ENCODE measurements at regions of chr7 and their contacts with region 1.

Region 1: DNA sequence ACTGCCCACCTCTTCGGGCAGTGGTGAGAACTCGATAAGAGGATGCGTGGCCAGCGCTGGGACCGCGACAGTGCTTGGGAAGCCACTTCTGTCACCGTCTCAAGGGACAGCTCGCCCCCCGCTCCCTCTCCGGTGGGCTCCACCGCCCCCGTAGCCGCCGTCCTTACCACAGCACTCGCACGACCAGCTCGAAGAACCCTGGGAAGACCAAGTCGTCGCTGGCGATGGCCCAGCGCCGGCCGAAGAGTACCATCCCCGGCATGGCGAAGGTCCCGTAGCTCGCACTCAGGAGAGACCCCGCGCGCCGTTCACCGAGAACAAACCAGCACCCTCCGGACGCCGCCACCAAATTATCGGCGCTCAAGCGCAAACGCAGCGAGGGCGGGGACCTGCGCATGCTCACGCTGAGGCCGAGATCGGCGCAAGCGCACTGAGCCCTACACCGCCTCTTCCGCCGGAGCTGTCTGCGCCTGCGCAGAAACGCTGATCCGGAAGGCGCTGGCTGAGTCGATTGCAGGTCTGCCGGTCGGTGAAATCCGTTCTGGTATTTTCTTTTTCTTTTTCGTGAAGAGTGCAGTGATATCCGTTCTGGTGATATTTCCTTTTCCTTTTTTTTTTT is at the start of gene DAGLB:
- DNase-seq: peak; percentile 89 to 100 (median 94)
- ATAC-seq: peak; percentile 83 to 87 (median 85)
- H3K4me3 ChIP-seq: peak within 1 kb of the TSS; percentile 98 to 99
- H3K4me3 Mint-ChIP-seq: peak within 1 kb of the TSS; percentile 92 to 97 (median 94)
- H3K27ac ChIP-seq: peak within 1 kb of the TSS; percentile 67
- H3K27ac Mint-ChIP-seq: peak within 1 kb of the TSS; percentile 96 to 97
- H3K4me1 ChIP-seq: peaks cover 25 to 33% of the 10 kb centered on the region in 2 experiments
- H3K4me1 Mint-ChIP-seq: peaks cover 32 to 45% (median 35%) of the 10 kb centered on the region in 3 donors
- H3K27me3 ChIP-seq: no peaks in the 10 kb centered on the region
- H3K27me3 Mint-ChIP-seq: no peaks in the 10 kb centered on the region
- total RNA-seq, gene DAGLB: 23.9 to 45.0 (median 38.9) TPM

Region 2: GRCh38 chr7:5792268-5792667 is 655.4 kb before region 1 on chr7:
- CTCF ChIA-PET with region 1: interaction called in 1 of 2 experiments, 10 read pairs
- POLR2A ChIA-PET with region 1: no interaction called
- DNase-seq: no peak
- ATAC-seq: no peak
- H3K4me3 ChIP-seq: no peak overlapping the region
- H3K4me3 Mint-ChIP-seq: no peak overlapping the region
- H3K27ac ChIP-seq: no peak overlapping the region
- H3K27ac Mint-ChIP-seq: no peak overlapping the region
- H3K4me1 ChIP-seq: no peaks in the 10 kb centered on the region
- H3K4me1 Mint-ChIP-seq: no peaks in the 10 kb centered on the region
- H3K27me3 ChIP-seq: no peaks in the 10 kb centered on the region
- H3K27me3 Mint-ChIP-seq: no peaks in the 10 kb centered on the region

Region 3: DNA sequence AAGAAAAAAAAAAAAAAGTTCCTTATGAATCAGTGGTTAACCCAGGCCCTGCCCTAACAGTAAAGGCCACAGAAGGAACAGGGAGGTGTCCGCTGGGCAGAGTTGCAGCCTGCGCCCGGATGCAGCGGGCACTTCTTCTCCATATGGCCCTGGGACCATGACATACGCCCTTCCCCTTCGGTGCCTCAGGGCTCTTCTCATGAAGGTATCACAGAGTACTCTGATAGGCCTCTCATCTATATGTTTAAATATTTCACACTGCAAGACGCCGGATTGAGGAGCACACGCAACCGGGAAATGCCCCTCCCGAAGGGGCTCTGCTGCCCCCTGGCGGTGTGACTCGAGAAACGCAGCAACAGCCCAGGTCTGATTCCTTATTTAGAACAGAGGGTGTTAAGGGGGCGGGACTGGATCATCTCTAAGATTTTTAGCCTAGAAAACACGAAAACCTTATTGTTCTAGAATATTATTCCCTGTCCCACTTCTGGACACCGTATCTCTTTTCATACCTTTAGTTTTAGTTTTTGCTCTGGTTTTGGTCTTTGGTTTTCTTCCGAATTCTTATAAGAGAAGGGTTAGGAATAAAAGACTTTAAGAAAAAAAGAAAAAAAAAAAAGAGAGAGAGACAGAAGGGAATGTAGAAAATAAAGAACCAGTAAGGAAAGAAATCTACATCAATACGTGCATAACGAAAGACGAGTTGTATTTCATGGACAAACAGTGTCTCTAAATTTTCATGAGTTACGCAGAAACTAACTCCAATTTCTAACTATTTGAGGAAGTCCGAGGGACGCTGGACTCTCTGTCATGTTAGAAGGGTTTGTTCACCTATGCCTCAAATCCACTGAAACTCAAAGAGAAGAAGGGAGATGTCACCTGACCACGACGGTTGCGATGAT is 12.0 kb before region 1 on chr7:
- CTCF ChIA-PET with region 1: interaction called, 5 to 12 read pairs
- POLR2A ChIA-PET with region 1: interaction called in 1 of 2 experiments, 3 read pairs
- DNase-seq: peak; percentile 70 to 92 (median 84)
- ATAC-seq: peak; percentile 88 to 94 (median 90)
- H3K4me3 ChIP-seq: peak overlapping the region; percentile 6 to 29
- H3K4me3 Mint-ChIP-seq: peak overlapping the region; percentile 70 to 82 (median 74)
- H3K27ac ChIP-seq: peak overlapping the region; percentile 16
- H3K27ac Mint-ChIP-seq: peak overlapping the region; percentile 81 to 85
- H3K4me1 ChIP-seq: peaks cover 27 to 40% of the 10 kb centered on the region in 2 experiments
- H3K4me1 Mint-ChIP-seq: peaks cover 42 to 45% (median 44%) of the 10 kb centered on the region in 3 donors
- H3K27me3 ChIP-seq: no peaks in the 10 kb centered on the region
- H3K27me3 Mint-ChIP-seq: no peaks in the 10 kb centered on the region

Region 4: DNA sequence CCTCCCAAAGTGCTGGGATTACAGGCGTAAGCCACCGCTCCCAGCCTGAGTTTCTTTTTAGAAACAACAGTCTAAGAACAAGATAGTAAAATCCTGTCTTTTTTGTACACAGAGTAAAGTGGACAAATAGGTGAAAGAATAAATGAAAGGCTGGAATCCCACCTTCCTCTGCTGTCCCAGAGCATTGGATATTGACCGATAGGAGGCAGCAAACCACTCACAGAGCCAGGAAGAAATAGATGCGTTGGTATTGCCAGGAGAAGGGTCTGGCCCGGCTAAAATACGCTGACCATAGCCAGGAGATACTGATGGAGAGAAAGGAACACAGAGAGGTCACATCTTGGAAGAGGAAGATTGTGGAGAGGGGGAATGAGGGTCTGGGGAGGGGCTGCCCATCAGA is 270.4 kb after region 1 on chr7:
- CTCF ChIA-PET with region 1: no interaction called
- POLR2A ChIA-PET with region 1: no interaction called
- DNase-seq: no peak
- ATAC-seq: no peak
- H3K4me3 ChIP-seq: no peak overlapping the region
- H3K4me3 Mint-ChIP-seq: no peak overlapping the region
- H3K27ac ChIP-seq: no peak overlapping the region
- H3K27ac Mint-ChIP-seq: no peak overlapping the region
- H3K4me1 ChIP-seq: no peaks in the 10 kb centered on the region
- H3K4me1 Mint-ChIP-seq: peaks cover 0 to 9% (median 0%) of the 10 kb centered on the region in 3 donors
- H3K27me3 ChIP-seq: peaks cover 0 to 35% of the 10 kb centered on the region in 2 experiments
- H3K27me3 Mint-ChIP-seq: peaks cover 22 to 38% of the 10 kb centered on the region in 2 donors

Region 5: DNA sequence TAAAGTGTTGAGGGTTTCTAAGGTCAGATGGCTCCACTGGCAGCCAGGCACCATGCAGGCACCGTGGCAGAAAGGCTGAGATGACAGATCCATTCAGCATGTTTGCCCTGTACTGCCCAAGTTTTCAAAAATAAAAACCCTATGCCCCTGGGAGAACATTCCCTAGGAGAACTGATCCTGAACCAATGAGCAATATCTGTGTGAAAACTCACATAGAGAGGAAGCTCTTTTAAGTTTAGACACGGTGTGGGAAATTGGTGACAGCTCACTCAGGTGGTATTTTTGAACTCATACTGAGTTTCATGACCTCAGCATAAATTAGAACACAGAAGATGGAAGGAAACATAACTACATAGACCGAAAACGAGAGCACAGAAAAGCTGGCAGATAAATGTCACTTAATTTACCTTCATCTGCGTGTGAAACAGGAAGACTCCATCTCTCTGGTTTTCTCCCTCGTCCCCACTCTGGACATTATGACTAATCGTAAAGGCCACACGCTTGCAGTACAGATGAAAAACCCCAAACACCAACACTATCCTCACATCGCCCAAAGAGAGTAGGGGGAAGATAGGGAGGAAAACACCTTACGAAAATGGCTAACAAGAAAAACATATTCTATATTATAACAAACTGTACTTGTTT is 1686.5 kb after region 1 on chr7:
- CTCF ChIA-PET with region 1: no interaction called
- POLR2A ChIA-PET with region 1: interaction called in 1 of 2 experiments, 13 read pairs
- DNase-seq: peak in 2 of 35 experiments; percentile 31 to 61
- ATAC-seq: peak; percentile 33 to 42 (median 37)
- H3K4me3 ChIP-seq: peak overlapping the region in 1 of 2 donors; percentile 2
- H3K4me3 Mint-ChIP-seq: peak overlapping the region; percentile 3 to 52 (median 10)
- H3K27ac ChIP-seq: peak overlapping the region; percentile 92
- H3K27ac Mint-ChIP-seq: peak overlapping the region; percentile 95 to 97
- H3K4me1 ChIP-seq: peaks cover 45 to 54% of the 10 kb centered on the region in 2 experiments
- H3K4me1 Mint-ChIP-seq: peaks cover 60 to 71% (median 60%) of the 10 kb centered on the region in 3 donors
- H3K27me3 ChIP-seq: no peaks in the 10 kb centered on the region
- H3K27me3 Mint-ChIP-seq: no peaks in the 10 kb centered on the region

Measured in T-cell (primary cell).